ENCODE measurements at regions of chr19 and their contacts with region 1.

Region 1: GRCh38 chr19:52048555-52049501 is at the start of gene ZNF432:
- DNase-seq: peak; percentile 95 to 98 (median 95)
- ATAC-seq: peak; percentile 97 to 99 (median 98)
- H3K4me3 ChIP-seq: peak within 1 kb of the TSS; percentile 48 to 76 (median 68)
- H3K27ac ChIP-seq: peak within 1 kb of the TSS; percentile 71 to 99 (median 94)
- H3K4me1 ChIP-seq: peaks cover 0 to 19% (median 7%) of the 10 kb centered on the region in 12 donors
- H3K27me3 ChIP-seq: no peaks in the 10 kb centered on the region
- CTCF ChIP-seq: no peak
- POLR2A ChIP-seq: peak in 1 of 2 donors; percentile 38
- total RNA-seq, gene ZNF432: 3.4 to 10.9 (median 8.2) TPM

Region 2: DNA sequence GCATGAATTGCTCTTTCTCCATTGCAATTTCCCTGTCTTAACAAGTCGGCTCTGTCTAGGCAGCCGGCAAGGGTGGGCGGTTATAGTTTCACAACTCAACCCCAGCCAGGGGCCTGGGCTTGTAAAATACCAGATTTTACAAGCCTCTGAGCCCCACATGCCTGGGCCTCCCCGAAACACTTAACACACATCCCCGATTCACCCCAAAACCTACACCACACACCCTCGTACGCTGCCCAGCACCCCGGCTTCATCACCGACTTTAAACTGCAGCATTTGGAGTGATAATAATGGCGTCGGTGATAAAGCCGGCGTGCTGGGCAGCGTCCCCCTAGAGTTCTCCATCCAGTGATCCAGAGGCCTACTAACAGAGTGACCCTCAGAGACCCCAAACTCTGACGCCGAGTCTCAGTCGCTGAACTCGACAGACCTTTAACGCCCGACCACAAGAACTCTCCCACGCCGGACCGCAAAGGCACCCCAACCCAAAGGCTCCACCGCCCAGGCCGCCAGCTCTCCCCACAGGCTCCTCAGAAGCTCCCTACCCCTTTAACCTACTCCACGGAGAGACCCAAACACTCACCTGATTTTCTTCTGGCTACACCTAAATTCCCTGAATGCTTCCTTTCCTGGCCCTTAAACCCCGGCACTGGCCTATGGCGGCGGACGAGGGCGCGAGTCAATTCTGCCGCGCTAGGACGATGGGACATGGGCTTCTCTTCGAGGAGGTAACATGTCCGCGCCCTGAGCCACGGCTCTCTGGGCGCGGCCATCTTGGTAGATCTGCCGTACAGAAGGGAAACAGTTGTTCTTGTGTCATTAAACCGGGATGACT is 144.3 kb before region 1 on chr19 and contains the start of gene ZNF649:
- intact Hi-C with region 1: no loop called
- DNase-seq: peak; percentile 84 to 91 (median 86)
- ATAC-seq: peak; percentile 98 to 100 (median 100)
- H3K4me3 ChIP-seq: peak within 1 kb of the TSS; percentile 60 to 93 (median 76)
- H3K27ac ChIP-seq: peak within 1 kb of the TSS; percentile 18 to 89 (median 86)
- H3K4me1 ChIP-seq: peaks cover 0 to 15% (median 9%) of the 10 kb centered on the region in 12 donors
- H3K27me3 ChIP-seq: peaks cover 0 to 33% (median 10%) of the 10 kb centered on the region in 9 donors
- CTCF ChIP-seq: peak in 4 of 12 donors; percentile 12 to 32 (median 23)
- POLR2A ChIP-seq: no peak
- total RNA-seq, gene ZNF649: 4.6 to 11.9 (median 8.6) TPM

Region 3: DNA sequence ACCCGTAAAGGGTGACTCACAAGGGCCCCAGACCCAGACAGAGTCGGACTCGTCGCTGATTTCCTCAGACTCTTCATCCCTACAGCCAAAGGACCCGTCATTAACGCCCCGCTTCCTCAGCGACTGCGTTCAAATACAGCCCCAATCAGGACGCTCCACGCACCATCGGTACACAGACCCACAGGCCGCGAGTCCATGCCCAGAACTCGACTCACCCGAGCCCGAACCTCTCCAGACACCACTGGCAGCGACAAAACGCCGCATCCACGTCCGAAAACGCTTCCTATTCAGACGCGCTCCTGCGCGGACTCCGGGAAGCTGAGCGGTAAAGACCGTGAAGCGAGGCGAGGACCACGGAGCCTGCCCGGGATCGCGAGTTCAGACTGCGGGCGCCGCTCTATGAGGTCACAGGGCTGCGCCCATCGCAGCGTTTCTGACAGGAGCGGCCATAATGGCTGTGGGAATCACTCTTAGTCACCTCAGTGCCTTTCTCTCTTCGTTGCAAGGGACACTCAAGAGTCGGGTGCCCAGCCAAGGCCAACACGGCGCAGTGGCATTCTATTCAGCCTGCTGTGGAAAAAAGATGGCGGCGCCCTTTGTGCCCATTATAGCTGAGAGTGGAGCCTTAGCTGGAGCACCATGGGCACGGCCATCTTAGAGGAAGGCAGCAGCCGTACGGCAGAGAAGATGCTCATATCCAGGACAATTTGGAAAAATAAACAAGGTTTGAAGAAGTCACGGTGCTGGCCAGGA is 20.6 kb before region 1 on chr19 and contains the start of gene ZNF614:
- intact Hi-C with region 1: loop called in 2 of 10 experiments (anchors 1 to 2 kb)
- DNase-seq: peak; percentile 88 to 92 (median 90)
- ATAC-seq: peak; percentile 96 to 99 (median 98)
- H3K4me3 ChIP-seq: peak within 1 kb of the TSS; percentile 67 to 92 (median 78)
- H3K27ac ChIP-seq: peak within 1 kb of the TSS; percentile 85 to 98 (median 92)
- H3K4me1 ChIP-seq: peaks cover 0 to 20% (median 13%) of the 10 kb centered on the region in 12 donors
- H3K27me3 ChIP-seq: no peaks in the 10 kb centered on the region
- CTCF ChIP-seq: no peak
- POLR2A ChIP-seq: peak in 1 of 2 donors; percentile 40
- total RNA-seq, gene ZNF614: 4.6 to 7.9 (median 6.8) TPM

Region 4: GRCh38 chr19:52095172-52096014 is 46.6 kb after region 1 on chr19 and contains the start of gene ZNF841:
- intact Hi-C with region 1: loop called in 1 of 10 experiments (anchors 1 kb)
- DNase-seq: peak; percentile 96 to 98 (median 97)
- ATAC-seq: peak; percentile 99 to 100 (median 100)
- H3K4me3 ChIP-seq: peak within 1 kb of the TSS; percentile 69 to 99 (median 82)
- H3K27ac ChIP-seq: peak within 1 kb of the TSS in 11 of 12 donors; percentile 31 to 87 (median 71)
- H3K4me1 ChIP-seq: peaks cover 0 to 24% (median 15%) of the 10 kb centered on the region in 12 donors
- H3K27me3 ChIP-seq: no peaks in the 10 kb centered on the region
- CTCF ChIP-seq: peak in 5 of 12 donors; percentile 6 to 48 (median 22)
- POLR2A ChIP-seq: peak in 1 of 2 donors; percentile 73
- total RNA-seq, gene ZNF841: 6.8 to 12.9 (median 8.5) TPM

Region 5: DNA sequence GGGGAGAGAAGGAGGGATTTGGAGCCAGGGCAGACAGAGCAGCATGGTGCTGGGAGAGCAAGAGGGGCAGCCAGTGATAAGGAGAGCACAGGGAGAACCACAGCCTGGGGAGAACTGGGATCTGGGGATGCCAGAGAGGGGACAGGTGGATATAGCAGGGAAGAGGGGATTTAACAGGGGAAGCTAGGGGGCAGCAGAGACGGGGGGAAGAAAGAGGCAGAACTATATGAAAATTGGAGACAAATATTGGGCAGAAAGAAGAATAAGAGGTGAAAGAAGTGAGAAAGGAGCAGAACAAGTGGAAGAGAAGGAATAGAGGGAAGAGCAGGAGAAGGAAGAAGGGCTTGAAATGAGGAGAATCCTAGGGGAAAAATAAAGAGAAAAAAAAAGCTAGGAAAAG is 342.3 kb after region 1 on chr19:
- intact Hi-C with region 1: no loop called
- DNase-seq: no peak
- ATAC-seq: no peak
- H3K4me3 ChIP-seq: no peak overlapping the region
- H3K27ac ChIP-seq: no peak overlapping the region
- H3K4me1 ChIP-seq: peaks cover 0 to under 1% (median 0%) of the 10 kb centered on the region in 12 donors
- H3K27me3 ChIP-seq: no peaks in the 10 kb centered on the region
- CTCF ChIP-seq: no peak
- POLR2A ChIP-seq: no peak

Measured in heart left ventricle (tissue), 16 donors.